Activated CD4-positive, alpha-beta T cell treated with anti-CD3 and anti-CD28 coated beads for 36 hours (primary cell): ENCODE measurements at regions of chr2 and their contacts with region 1.

Region 1: GRCh38 chr2:23926750-23927571 is at the start of gene ATAD2B:
- DNase-seq: peak; percentile 96
- ATAC-seq: peak; percentile 80
- H3K4me3 Mint-ChIP-seq: peak within 1 kb of the TSS; percentile 80
- H3K27ac Mint-ChIP-seq: peak within 1 kb of the TSS; percentile 100
- H3K4me1 Mint-ChIP-seq: peaks cover 41% of the 10 kb centered on the region
- H3K27me3 Mint-ChIP-seq: no peaks in the 10 kb centered on the region
- total RNA-seq, gene ATAD2B: 10.9 to 12.7 TPM

Region 2: DNA sequence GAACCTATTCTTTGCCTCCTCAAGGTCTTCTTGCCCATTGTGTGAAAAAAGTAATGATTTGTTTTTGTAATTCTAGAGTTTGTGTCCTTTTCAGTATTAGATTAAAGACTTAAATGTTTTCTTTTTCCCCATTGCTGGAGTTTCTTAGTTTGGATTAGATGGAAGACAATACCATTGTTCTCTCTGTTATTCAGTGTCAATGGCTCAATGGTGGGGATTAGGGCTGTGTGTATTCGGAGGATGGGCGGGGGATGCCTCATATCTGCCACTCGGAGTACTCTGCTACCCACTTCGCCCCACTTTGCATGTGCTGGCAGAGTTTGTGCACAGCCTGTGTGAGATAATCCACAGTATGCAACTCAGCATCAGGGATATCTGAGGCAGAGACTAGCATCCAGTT is 451.9 kb before region 1 on chr2:
- CTCF ChIA-PET with region 1: no interaction called
- POLR2A ChIA-PET with region 1: no interaction called
- intact Hi-C with region 1: no loop called
- DNase-seq: no peak
- ATAC-seq: no peak
- H3K4me3 Mint-ChIP-seq: no peak overlapping the region
- H3K27ac Mint-ChIP-seq: no peak overlapping the region
- H3K4me1 Mint-ChIP-seq: no peaks in the 10 kb centered on the region
- H3K27me3 Mint-ChIP-seq: peaks cover 6% of the 10 kb centered on the region

Region 3: GRCh38 chr2:23824777-23825212 is 102.2 kb before region 1 on chr2:
- CTCF ChIA-PET with region 1: interaction called, 34 read pairs
- POLR2A ChIA-PET with region 1: interaction called, 6 read pairs
- intact Hi-C with region 1: loop called in 1 of 2 experiments (anchors 1 kb)
- DNase-seq: peak; percentile 17
- ATAC-seq: peak; percentile 60
- H3K4me3 Mint-ChIP-seq: no peak overlapping the region
- H3K27ac Mint-ChIP-seq: no peak overlapping the region
- H3K4me1 Mint-ChIP-seq: peaks cover 3% of the 10 kb centered on the region
- H3K27me3 Mint-ChIP-seq: no peaks in the 10 kb centered on the region

Region 4: GRCh38 chr2:23850564-23851256 is 76.3 kb before region 1 on chr2:
- CTCF ChIA-PET with region 1: no interaction called
- POLR2A ChIA-PET with region 1: no interaction called
- intact Hi-C with region 1: no loop called
- DNase-seq: no peak
- ATAC-seq: no peak
- H3K4me3 Mint-ChIP-seq: no peak overlapping the region
- H3K27ac Mint-ChIP-seq: no peak overlapping the region
- H3K4me1 Mint-ChIP-seq: peaks cover 5% of the 10 kb centered on the region
- H3K27me3 Mint-ChIP-seq: no peaks in the 10 kb centered on the region

Region 5: GRCh38 chr2:24046930-24047702 is 120.2 kb after region 1 on chr2 and contains the start of gene WDCP:
- CTCF ChIA-PET with region 1: interaction called, 12 read pairs
- POLR2A ChIA-PET with region 1: interaction called, 14 read pairs
- intact Hi-C with region 1: loop called (anchors 1 kb)
- DNase-seq: peak; percentile 97
- ATAC-seq: peak; percentile 100
- H3K4me3 Mint-ChIP-seq: peak within 1 kb of the TSS; percentile 88
- H3K27ac Mint-ChIP-seq: peak within 1 kb of the TSS; percentile 91
- H3K4me1 Mint-ChIP-seq: peaks cover 25% of the 10 kb centered on the region
- H3K27me3 Mint-ChIP-seq: peaks cover 5% of the 10 kb centered on the region
- total RNA-seq, gene WDCP: 13.2 to 21.5 TPM

Region 6: DNA sequence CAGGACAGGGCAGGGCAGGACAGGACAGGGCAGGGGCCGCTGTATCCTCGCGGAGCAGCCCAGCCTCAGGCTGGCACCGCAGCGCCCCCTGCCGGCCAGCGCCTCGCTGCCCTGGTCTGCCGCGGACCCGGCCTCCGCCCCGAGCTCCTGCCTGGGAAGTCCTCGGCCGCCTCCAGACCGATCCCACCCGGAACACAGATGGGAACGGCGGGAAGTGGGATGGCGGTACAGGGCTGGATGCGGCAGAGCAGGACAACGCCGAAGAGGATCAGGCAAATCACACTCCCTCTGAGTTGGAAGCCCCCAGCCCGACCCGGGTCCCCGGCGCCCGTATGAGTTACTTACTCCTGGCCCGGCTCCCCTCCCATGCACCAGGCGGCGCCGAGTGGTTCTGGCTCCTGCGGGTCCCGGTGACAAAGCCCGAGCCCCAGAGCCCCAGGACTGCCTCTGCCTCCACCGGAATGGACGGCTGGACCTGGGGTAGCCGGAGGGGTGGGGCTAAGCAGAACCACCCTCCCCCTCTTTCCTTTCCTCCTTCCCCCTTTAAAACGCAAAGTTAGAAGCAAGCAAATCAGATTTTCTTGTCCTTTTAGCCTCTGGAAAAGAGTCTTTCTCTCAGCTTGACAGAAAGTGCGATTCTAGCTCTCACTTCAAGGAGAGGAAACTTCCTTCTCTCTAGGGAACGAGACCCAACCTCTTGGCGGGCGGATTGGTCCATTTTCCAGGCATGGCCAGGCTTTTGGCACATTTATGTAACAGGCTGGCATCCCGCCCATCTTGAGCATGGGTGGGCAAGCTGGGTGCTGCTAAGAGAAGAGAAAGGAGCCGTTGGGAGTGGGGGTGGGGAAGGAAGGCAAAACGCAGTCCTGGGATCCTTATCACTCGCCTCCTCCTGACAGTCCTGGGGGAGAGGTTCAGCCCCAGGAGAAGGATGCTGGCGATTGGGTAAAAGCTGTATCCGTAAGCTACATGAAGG is 157.7 kb after region 1 on chr2 and contains the start of gene TP53I3:
- CTCF ChIA-PET with region 1: interaction called, 34 read pairs
- POLR2A ChIA-PET with region 1: interaction called, 5 read pairs
- intact Hi-C with region 1: loop called (anchors 1 to 2 kb)
- DNase-seq: peak; percentile 91
- ATAC-seq: peak; percentile 96
- H3K4me3 Mint-ChIP-seq: peak within 1 kb of the TSS; percentile 79
- H3K27ac Mint-ChIP-seq: peak within 1 kb of the TSS; percentile 82
- H3K4me1 Mint-ChIP-seq: peaks cover 13% of the 10 kb centered on the region
- H3K27me3 Mint-ChIP-seq: no peaks in the 10 kb centered on the region
- total RNA-seq, gene TP53I3: 1.0 to 1.2 TPM

Region 7: DNA sequence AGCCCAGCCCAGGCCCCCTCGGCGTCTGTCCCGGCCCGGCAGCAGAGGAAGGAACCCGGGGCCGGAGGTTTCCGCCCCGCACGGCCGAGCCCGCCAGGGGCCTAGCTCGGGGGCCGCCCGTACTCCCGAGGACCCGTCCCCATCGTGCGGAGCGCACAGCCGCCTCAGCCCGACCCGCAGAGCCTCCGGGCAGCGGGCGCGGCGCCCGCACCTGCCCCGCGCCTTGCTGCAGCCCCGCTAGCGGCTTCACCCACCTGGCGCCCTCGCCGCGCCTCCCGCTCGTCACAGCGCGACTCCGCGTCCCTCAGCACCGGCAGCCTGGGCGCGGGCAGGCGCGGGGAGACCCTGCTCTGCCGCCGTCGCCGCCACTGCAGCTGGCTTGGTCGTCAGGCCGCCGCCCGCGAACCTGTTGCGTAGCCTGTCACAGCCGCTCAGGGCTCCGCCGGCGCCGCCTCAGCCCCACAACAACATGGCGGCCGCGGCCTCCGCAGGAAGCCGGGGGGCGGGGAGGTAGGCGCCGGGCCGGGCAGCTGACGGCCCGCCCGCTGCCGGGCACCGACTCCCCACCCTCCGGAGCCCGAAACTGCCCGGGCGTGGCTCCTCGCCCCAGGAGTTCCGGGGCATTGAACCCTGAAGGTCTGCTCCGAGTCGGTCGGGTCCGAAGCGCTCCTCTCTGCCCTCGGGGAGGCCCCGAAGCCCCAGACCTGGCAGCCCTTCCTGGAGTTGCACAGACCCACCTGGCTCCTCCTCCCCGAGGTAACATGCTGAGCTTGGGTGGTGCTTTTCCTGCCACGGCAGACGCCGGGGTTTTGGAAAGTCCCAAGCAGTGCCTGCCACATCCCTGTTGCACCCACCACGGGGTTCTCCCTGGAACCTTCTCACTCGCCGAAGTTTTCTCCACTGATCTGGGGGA is 433.3 kb after region 1 on chr2 and contains the start of gene ITSN2:
- CTCF ChIA-PET with region 1: no interaction called
- POLR2A ChIA-PET with region 1: no interaction called
- intact Hi-C with region 1: loop called in 1 of 2 experiments (anchors 2 kb)
- DNase-seq: peak; percentile 90
- ATAC-seq: peak; percentile 89
- H3K4me3 Mint-ChIP-seq: peak within 1 kb of the TSS; percentile 84
- H3K27ac Mint-ChIP-seq: peak within 1 kb of the TSS; percentile 94
- H3K4me1 Mint-ChIP-seq: peaks cover 29% of the 10 kb centered on the region
- H3K27me3 Mint-ChIP-seq: no peaks in the 10 kb centered on the region
- total RNA-seq, gene ITSN2: 46.0 to 49.6 TPM

Region 8: DNA sequence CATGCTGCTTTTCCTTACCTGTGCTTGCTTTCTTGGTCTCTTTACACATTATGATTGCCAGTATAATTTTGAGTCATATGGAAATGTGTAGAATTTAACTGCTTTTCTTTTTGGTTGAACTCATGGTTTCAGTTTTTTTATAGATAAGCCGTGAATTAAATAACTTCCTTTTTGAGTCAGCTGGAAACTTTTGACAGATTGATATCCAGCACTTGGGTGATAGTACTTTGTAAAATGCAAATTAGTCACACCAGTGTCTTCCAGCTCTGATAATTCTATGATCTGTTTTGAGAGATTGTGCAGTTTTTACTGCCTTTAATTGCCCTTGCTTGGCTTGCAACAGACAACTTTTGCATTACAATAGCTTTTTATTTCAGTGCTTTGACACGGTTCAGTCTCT is 650.5 kb after region 1 on chr2:
- CTCF ChIA-PET with region 1: no interaction called
- POLR2A ChIA-PET with region 1: no interaction called
- intact Hi-C with region 1: loop called in 1 of 2 experiments (anchors 2 kb)
- DNase-seq: no peak
- ATAC-seq: peak; percentile 76
- H3K4me3 Mint-ChIP-seq: peak overlapping the region; percentile 3
- H3K27ac Mint-ChIP-seq: peak overlapping the region; percentile 79
- H3K4me1 Mint-ChIP-seq: peaks cover 76% of the 10 kb centered on the region
- H3K27me3 Mint-ChIP-seq: no peaks in the 10 kb centered on the region